Aorta (tissue), 5 donors: ENCODE measurements at regions of chr22 and their contacts with region 1.

Region 1: GRCh38 chr22:27420817-27421361 is 380.7 kb downstream of the MN1 start:
- DNase-seq: peak; percentile 91 to 92
- ATAC-seq: peak; percentile 89
- H3K4me3 ChIP-seq: no peak overlapping the region
- H3K27ac ChIP-seq: peak overlapping the region; percentile 7 to 10
- H3K4me1 ChIP-seq: peaks cover 0 to 5% of the 10 kb centered on the region in 2 donors
- H3K27me3 ChIP-seq: no peaks in the 10 kb centered on the region

Region 2: GRCh38 chr22:27462190-27462589 is 41.3 kb after region 1 on chr22:
- intact Hi-C with region 1: loop called in 1 of 2 experiments (anchors 2 kb)
- DNase-seq: peak in 1 of 2 donors; percentile 25
- ATAC-seq: no peak
- H3K4me3 ChIP-seq: no peak overlapping the region
- H3K27ac ChIP-seq: peak overlapping the region in 1 of 2 donors; percentile 87
- H3K4me1 ChIP-seq: peaks cover 0 to 7% of the 10 kb centered on the region in 2 donors
- H3K27me3 ChIP-seq: no peaks in the 10 kb centered on the region